Activated CD4-positive, alpha-beta memory T cell treated with anti-CD3 and anti-CD28 coated beads for 36 hours (primary cell): ENCODE measurements at regions of chr13 and their contacts with region 1.

Region 1: GRCh38 chr13:96020155-96020575 is 33.0 kb downstream of the UGGT2 start:
- DNase-seq: no peak
- H3K4me3 Mint-ChIP-seq: no peak overlapping the region
- H3K27ac Mint-ChIP-seq: no peak overlapping the region
- H3K4me1 Mint-ChIP-seq: no peaks in the 10 kb centered on the region
- H3K27me3 Mint-ChIP-seq: no peaks in the 10 kb centered on the region

Region 2: DNA sequence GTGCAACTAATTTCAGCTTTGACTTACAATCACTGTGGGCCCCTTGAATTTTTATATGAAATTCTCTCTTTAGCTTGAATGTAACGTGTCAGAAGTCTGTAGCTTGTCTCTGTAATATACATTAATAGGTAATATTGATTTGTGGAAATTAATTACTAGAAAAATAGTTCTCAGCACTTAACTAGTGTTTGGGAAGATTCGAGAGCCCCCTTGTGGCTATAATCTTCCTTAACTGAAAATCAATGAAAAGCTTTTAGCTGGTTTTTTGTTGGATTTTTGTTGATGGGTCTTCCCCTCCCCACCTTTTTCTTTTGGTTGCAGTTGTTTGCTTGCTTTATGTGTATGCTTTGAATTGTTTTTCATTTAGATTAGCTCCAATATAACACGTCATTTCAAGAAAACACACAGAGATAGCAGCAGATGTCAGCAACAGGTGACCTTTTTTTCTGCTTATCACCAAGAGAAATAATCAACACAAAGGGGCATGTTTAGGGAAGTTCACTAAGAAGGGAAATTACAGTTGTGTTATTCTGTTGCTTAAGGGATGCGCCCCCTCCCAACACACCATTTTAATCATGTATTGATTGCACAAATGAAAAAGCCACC is 797.3 kb after region 1 on chr13:
- CTCF ChIA-PET with region 1: interaction called, 6 read pairs
- POLR2A ChIA-PET with region 1: no interaction called
- intact Hi-C with region 1: loop called (anchors 10 kb)
- DNase-seq: no peak
- H3K4me3 Mint-ChIP-seq: no peak overlapping the region
- H3K27ac Mint-ChIP-seq: no peak overlapping the region
- H3K4me1 Mint-ChIP-seq: no peaks in the 10 kb centered on the region
- H3K27me3 Mint-ChIP-seq: no peaks in the 10 kb centered on the region